HEK293 (cell line): ENCODE measurements at regions of chr9 and their contacts with region 1.

Region 1: DNA sequence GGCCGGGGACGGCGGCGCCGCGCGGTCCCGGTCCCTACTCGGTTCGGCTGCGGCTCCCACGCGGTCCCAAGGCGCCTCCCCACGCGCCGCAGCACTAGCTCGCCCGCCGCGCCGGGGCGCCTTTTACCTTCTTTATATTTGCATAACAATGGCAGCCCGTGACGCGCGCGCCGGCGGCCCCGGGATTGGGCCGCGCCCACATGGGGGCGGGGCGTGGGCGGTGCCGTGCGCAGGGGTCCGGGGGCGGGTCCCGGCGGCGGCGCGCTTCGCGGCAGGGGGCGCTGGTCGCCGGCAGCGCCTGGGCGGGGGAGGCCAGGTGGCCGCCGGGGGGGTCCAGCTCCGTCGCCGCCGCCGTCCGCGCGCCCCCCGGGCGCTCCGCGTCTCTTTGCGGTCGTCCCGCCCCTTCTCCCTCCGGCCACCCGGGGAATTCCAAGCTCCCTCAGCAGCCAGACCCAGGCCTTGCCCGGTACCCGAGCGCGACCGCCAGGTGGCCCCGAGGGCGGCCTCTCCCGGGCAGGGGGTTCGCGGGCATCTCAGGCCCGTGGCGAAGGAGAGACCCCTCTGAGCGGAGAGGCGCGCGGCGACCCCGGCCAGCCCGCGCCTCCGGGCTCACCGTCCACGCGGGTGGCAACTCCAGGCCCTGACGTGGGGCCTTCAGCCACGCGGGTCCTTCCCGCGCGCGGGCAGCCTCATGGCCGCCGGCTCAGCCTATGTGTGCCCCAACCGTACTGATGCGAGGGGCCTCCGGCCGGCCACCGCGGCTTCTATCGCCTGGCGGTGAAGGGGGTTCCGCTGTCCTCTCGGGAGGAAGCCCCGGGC is at the start of gene NRARP:
- H3K4me3 ChIP-seq: peak within 1 kb of the TSS; percentile 73
- H3K27ac ChIP-seq: peak within 1 kb of the TSS; percentile 91
- H3K4me1 ChIP-seq: peaks cover 15% of the 10 kb centered on the region
- CTCF ChIP-seq: peak; percentile 84

Region 2: GRCh38 chr9:137150617-137151457 is 151.5 kb before region 1 on chr9:
- CTCF ChIA-PET with region 1: no interaction called
- POLR2A ChIA-PET with region 1: interaction called, 11 read pairs
- H3K4me3 ChIP-seq: no peak overlapping the region
- H3K27ac ChIP-seq: no peak overlapping the region
- H3K4me1 ChIP-seq: no peaks in the 10 kb centered on the region
- CTCF ChIP-seq: no peak

Region 3: GRCh38 chr9:137286975-137287383 is 15.4 kb before region 1 on chr9:
- CTCF ChIA-PET with region 1: interaction called, 21 read pairs
- POLR2A ChIA-PET with region 1: interaction called, 9 read pairs
- H3K4me3 ChIP-seq: no peak overlapping the region
- H3K27ac ChIP-seq: no peak overlapping the region
- H3K4me1 ChIP-seq: no peaks in the 10 kb centered on the region
- CTCF ChIP-seq: peak; percentile 92

Region 4: GRCh38 chr9:137316012-137316976 is 13.9 kb after region 1 on chr9:
- CTCF ChIA-PET with region 1: interaction called, 8 read pairs
- POLR2A ChIA-PET with region 1: interaction called, 40 read pairs
- H3K4me3 ChIP-seq: no peak overlapping the region
- H3K27ac ChIP-seq: no peak overlapping the region
- H3K4me1 ChIP-seq: no peaks in the 10 kb centered on the region
- CTCF ChIP-seq: no peak

Region 5: DNA sequence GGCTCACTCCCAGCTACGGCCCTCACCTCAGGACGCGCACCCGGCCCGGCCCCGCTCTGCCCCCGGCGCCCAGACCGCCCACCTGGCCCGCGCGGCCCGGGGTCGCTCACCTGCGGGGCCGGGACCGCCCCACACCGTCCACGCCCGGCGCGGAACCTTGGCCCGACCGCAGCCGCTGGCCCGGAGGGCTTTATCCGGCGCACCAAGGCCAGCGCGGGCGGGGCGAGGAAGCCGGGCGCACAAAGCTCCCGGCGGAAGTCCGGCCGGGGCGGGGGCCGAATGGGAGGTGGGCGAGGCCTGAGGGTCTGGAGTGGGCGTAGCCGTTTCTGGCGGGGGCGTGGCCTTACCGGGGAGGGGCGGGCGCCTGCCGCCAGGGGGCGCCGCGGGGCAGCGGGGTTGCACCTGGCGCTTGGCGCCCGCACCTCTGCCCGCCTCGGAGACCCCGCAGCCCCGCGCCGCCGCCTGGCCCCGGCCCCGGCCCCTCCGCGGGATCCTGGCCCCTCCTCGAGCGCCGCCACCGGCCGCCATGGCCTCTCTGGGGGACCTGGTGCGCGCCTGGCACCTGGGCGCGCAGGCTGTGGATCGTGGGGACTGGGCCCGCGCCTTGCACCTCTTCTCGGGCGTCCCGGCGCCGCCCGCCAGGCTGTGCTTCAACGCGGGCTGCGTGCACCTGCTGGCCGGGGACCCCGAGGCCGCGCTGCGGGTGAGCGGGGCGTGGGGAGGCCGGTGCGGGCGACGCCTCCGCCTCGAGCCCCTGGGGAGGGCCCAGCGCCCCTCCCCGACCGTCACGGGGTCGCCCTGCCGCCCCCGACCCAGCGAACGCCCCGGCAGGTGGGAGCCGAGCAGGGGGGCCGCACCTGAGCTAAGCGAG is 120.9 kb after region 1 on chr9 and contains the starts of genes EXD3 and NOXA1:
- CTCF ChIA-PET with region 1: interaction called, 6 read pairs
- POLR2A ChIA-PET with region 1: interaction called, 25 read pairs
- H3K4me3 ChIP-seq: peak within 1 kb of the TSS; percentile 85
- H3K27ac ChIP-seq: peak within 1 kb of the TSS; percentile 86
- H3K4me1 ChIP-seq: peaks cover 9% of the 10 kb centered on the region
- CTCF ChIP-seq: peak; percentile 47; the same call in 1 of the 2 replicates

Region 6: GRCh38 chr9:137459147-137459600 is 156.8 kb after region 1 on chr9 and contains the start of gene NSMF:
- CTCF ChIA-PET with region 1: no interaction called
- POLR2A ChIA-PET with region 1: interaction called, 10 read pairs
- H3K4me3 ChIP-seq: peak within 1 kb of the TSS; percentile 61
- H3K27ac ChIP-seq: peak within 1 kb of the TSS; percentile 71; the same call in 1 of the 2 replicates
- H3K4me1 ChIP-seq: peaks cover 6% of the 10 kb centered on the region
- CTCF ChIP-seq: no peak